PC-3 (cell line): ENCODE measurements at regions of chr3 and their contacts with region 1.

Region 1: DNA sequence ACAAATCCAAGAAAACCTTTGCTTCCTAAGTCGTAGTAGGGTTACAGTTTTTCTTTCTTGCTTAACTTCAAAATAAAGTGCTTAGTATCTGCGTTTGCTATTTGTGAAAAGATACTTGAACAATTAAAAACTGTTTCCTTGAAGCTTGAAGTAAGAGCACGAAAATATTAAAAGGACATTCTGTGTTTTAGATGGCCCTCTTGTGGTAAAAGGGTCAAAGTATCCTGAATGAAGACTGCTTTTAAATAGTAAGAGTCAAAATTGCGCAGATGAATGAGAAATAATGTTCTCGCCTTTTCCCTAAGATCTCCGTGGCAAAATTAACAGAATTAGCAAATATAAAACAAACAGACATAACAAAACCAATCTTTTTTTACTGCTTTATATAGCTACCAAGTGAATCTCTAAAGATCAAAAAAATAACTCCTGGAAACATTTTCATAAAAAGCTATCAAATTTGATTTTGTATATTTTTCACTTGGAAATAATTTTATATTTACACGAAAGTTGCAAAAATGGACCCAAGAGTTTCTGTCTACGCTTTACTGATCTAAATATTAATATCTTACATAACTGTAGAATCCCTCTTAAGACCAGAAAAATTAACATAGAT is 175.4 kb downstream of the MBNL1 start:
- DNase-seq: peak; percentile 78
- ATAC-seq: peak; percentile 45
- H3K4me3 ChIP-seq: no peak overlapping the region
- H3K27ac ChIP-seq: 0 out of 2 replicates have a peak overlapping the region, but pooled peaks have one; percentile 0
- H3K4me1 ChIP-seq: peaks cover 22% of the 10 kb centered on the region; the same call in 1 of the 2 replicates
- H3K27me3 ChIP-seq: no peaks in the 10 kb centered on the region
- CTCF ChIP-seq: peak; percentile 90

Region 2: DNA sequence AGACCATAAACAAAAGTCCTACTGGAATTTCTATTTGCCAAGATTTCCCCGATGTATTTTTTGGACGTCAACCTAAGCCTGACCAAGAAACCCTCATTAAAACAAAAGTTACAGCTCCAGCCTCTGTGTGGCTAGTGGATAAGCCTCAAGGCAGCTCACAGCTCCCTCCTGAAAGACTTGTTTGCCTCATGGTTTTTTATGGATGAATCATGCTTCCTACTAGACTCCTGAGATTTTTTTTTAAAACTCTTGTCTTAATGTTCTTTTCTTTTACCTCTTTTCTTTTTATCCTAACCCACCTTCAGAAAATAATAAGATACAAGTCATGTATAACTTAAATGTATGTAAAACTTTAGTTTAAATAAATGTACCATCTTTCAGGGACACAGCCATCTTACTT is 518.3 kb before region 1 on chr3:
- CTCF ChIA-PET with region 1: no interaction called
- POLR2A ChIA-PET with region 1: no interaction called
- intact Hi-C with region 1: loop called (anchors 5 kb)
- DNase-seq: peak; percentile 89
- ATAC-seq: peak; percentile 89
- H3K4me3 ChIP-seq: peak overlapping the region; percentile 57; the same call in 1 of the 2 replicates
- H3K27ac ChIP-seq: peak overlapping the region; percentile 92
- H3K4me1 ChIP-seq: peaks cover 47% of the 10 kb centered on the region
- H3K27me3 ChIP-seq: no peaks in the 10 kb centered on the region
- CTCF ChIP-seq: no peak

Region 3: DNA sequence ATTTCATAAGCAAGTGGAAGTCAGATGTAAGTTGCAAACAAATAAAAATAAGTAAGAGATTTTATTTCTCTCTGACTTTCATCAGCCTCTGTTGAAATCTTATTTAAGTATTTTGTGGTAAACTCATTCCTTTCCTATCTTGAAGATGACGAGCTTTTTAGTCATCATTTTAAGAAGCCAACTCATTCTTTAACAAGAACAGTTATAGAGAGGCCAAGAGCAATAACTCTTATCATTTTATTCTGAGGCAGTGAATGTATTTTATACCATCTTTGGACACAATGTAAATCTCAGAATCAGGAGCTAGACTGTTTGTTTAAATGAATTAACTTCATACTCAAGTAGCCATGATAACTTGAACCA is 322.9 kb before region 1 on chr3:
- CTCF ChIA-PET with region 1: no interaction called
- POLR2A ChIA-PET with region 1: no interaction called
- intact Hi-C with region 1: loop called (anchors 5 kb)
- DNase-seq: peak; percentile 91
- ATAC-seq: peak; percentile 91
- H3K4me3 ChIP-seq: no peak overlapping the region
- H3K27ac ChIP-seq: peak overlapping the region; percentile 65
- H3K4me1 ChIP-seq: peaks cover 27% of the 10 kb centered on the region
- H3K27me3 ChIP-seq: no peaks in the 10 kb centered on the region
- CTCF ChIP-seq: no peak

Region 4: GRCh38 chr3:152177757-152178156 is 266.4 kb before region 1 on chr3:
- CTCF ChIA-PET with region 1: no interaction called
- POLR2A ChIA-PET with region 1: no interaction called
- intact Hi-C with region 1: loop called (anchors 5 kb)
- DNase-seq: no peak
- ATAC-seq: no peak
- H3K4me3 ChIP-seq: no peak overlapping the region
- H3K27ac ChIP-seq: no peak overlapping the region
- H3K4me1 ChIP-seq: peaks cover 28% of the 10 kb centered on the region
- H3K27me3 ChIP-seq: no peaks in the 10 kb centered on the region
- CTCF ChIP-seq: no peak

Region 5: DNA sequence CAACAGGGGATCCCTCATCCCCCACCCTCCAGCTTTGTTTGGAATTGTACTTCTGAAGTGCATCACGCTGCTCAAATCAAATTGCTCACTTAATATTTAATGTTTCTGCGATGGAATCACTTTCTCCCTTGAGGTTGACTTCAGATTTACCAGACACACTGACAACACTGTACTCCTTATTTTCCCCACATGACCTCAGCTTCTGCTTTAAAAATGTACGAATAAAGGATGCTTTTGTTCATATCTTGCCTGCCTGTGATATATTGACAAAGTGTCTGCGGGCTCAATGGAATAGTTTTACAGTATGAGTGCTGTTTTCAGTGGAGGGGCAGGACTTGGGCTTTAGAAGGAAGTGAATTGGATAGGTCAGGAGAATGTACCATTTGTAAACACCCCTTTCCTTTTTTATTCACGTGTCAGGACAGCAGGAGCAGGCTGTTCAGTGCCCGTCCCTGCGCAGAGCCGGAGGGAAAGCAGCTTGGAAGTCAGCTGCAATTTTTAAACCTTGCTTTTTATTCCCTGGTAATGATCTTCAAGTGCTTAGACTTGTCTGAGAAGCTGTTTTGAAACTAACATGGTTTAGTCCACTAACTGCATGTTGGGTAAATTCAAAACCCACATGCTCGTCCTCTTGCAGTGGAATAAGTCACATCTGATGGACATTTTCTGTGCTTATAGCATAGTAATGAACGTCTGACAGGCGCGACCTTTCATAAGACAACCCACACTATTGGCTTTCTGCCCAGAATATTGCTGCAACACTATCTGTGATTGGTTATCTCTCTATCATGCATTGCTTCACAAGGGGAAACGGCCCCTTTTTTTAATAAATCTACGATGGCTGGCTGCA is 145.5 kb before region 1 on chr3:
- CTCF ChIA-PET with region 1: interaction called, 3 read pairs
- POLR2A ChIA-PET with region 1: no interaction called
- intact Hi-C with region 1: loop called (anchors 10 kb)
- DNase-seq: peak; percentile 73
- ATAC-seq: peak; percentile 60
- H3K4me3 ChIP-seq: peak overlapping the region; percentile 29; the same call in 1 of the 2 replicates
- H3K27ac ChIP-seq: peak overlapping the region; percentile 73
- H3K4me1 ChIP-seq: peaks cover 39% of the 10 kb centered on the region
- H3K27me3 ChIP-seq: no peaks in the 10 kb centered on the region
- CTCF ChIP-seq: no peak

Region 6: GRCh38 chr3:152328841-152329240 is 115.3 kb before region 1 on chr3:
- CTCF ChIA-PET with region 1: no interaction called
- POLR2A ChIA-PET with region 1: interaction called, 4 read pairs
- intact Hi-C with region 1: loop called (anchors 2 kb)
- DNase-seq: peak; percentile 94
- ATAC-seq: peak; percentile 63
- H3K4me3 ChIP-seq: peak overlapping the region; percentile 52
- H3K27ac ChIP-seq: peak overlapping the region; percentile 93
- H3K4me1 ChIP-seq: peaks cover 58% of the 10 kb centered on the region
- H3K27me3 ChIP-seq: no peaks in the 10 kb centered on the region
- CTCF ChIP-seq: no peak

Region 7: DNA sequence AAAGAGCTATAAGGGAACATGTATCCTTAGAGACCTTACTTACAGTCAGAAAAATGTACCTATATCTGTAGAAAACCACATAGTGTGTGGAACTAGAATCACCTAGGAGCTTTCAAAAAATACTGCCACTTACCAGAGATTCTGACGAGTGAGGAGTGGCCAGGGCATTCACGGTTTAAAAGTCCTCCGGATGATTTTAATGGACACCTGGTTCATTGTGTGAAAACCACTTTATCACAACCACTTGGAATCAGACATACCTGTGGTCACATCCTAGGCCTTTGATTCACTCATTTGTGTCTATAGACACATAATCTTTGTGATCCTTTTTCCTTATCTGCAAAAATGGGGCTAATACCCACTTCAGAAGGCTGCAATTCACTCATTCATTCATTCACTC is 15.6 kb before region 1 on chr3:
- CTCF ChIA-PET with region 1: no interaction called
- POLR2A ChIA-PET with region 1: interaction called, 11 read pairs
- intact Hi-C with region 1: no loop called
- DNase-seq: no peak
- ATAC-seq: no peak
- H3K4me3 ChIP-seq: no peak overlapping the region
- H3K27ac ChIP-seq: no peak overlapping the region
- H3K4me1 ChIP-seq: 0 out of 2 replicates have a peak, but pooled peaks cover 8% of the 10 kb centered on the region
- H3K27me3 ChIP-seq: no peaks in the 10 kb centered on the region
- CTCF ChIP-seq: no peak

Region 8: GRCh38 chr3:152458376-152459117 is 14.4 kb after region 1 on chr3:
- CTCF ChIA-PET with region 1: no interaction called
- POLR2A ChIA-PET with region 1: no interaction called
- intact Hi-C with region 1: no loop called
- DNase-seq: no peak
- ATAC-seq: no peak
- H3K4me3 ChIP-seq: no peak overlapping the region
- H3K27ac ChIP-seq: no peak overlapping the region
- H3K4me1 ChIP-seq: no peaks in the 10 kb centered on the region
- H3K27me3 ChIP-seq: no peaks in the 10 kb centered on the region
- CTCF ChIP-seq: no peak